Activated T-helper 2 cell treated with anti-CD3 and anti-CD28 coated beads, Interferon-gamma antibody, Interleukin-2, Interleukin-4, amounts not matched to agents 10 μg/mL and 5 μg/mL and 100 μg/mL, durations not matched to agents 14 hours and 24 hours and 36 hours (primary cell): ENCODE measurements at regions of chr2 and their contacts with region 1.

Region 1: GRCh38 chr2:161954103-161954502 is 119.9 kb downstream of the DPP4 start:
- DNase-seq: no peak
- H3K4me3 Mint-ChIP-seq: peak overlapping the region; percentile 37
- H3K27ac Mint-ChIP-seq: peak overlapping the region; percentile 94
- H3K4me1 Mint-ChIP-seq: peaks cover 66% of the 10 kb centered on the region
- H3K27me3 Mint-ChIP-seq: no peaks in the 10 kb centered on the region

Region 2: GRCh38 chr2:160406591-160407392 is 1547.3 kb before region 1 on chr2:
- intact Hi-C with region 1: loop called (anchors 5 kb)
- DNase-seq: peak; percentile 60
- H3K4me3 Mint-ChIP-seq: peak overlapping the region; percentile 86
- H3K27ac Mint-ChIP-seq: peak overlapping the region; percentile 80
- H3K4me1 Mint-ChIP-seq: peaks cover 74% of the 10 kb centered on the region
- H3K27me3 Mint-ChIP-seq: no peaks in the 10 kb centered on the region

Region 3: GRCh38 chr2:161199912-161200701 is 754.0 kb before region 1 on chr2:
- intact Hi-C with region 1: no loop called
- DNase-seq: no peak
- H3K4me3 Mint-ChIP-seq: no peak overlapping the region
- H3K27ac Mint-ChIP-seq: peak overlapping the region; percentile 42
- H3K4me1 Mint-ChIP-seq: peaks cover 25% of the 10 kb centered on the region
- H3K27me3 Mint-ChIP-seq: no peaks in the 10 kb centered on the region

Region 4: GRCh38 chr2:161238560-161239325 is 715.4 kb before region 1 on chr2:
- intact Hi-C with region 1: loop called (anchors 10 kb)
- DNase-seq: peak; percentile 39
- H3K4me3 Mint-ChIP-seq: peak overlapping the region; percentile 84
- H3K27ac Mint-ChIP-seq: peak overlapping the region; percentile 66
- H3K4me1 Mint-ChIP-seq: peaks cover 37% of the 10 kb centered on the region
- H3K27me3 Mint-ChIP-seq: no peaks in the 10 kb centered on the region

Region 5: GRCh38 chr2:161938339-161938738 is 15.8 kb before region 1 on chr2:
- intact Hi-C with region 1: no loop called
- DNase-seq: no peak
- H3K4me3 Mint-ChIP-seq: no peak overlapping the region
- H3K27ac Mint-ChIP-seq: no peak overlapping the region
- H3K4me1 Mint-ChIP-seq: no peaks in the 10 kb centered on the region
- H3K27me3 Mint-ChIP-seq: peaks cover 55% of the 10 kb centered on the region

Region 6: DNA sequence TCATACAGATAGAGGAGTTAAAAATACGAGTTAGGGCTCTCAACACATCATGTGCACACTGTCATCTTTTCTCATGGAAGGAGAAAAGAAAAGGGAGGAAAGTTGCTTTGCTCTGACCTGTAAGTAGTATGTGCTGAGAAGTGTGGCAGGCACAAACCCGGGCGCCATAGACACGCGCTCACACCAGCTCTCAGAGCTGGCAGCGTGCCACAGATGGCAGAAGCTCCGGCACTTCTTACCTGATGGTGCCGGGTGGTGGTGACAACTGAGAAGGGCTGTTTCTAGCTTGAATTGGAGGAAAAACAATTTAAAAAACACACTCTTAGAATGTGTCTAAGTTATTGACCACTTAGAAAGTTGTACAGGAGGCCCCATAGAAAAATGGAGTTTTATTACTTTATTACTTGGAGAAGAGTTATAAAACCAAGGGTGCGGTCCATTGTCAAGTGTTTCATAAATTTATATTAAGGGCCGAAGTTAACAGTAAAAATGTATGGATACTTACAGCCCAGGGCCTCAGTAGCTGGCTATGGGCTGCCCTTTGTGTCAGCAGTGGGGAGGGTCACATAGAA is 27.7 kb after region 1 on chr2:
- intact Hi-C with region 1: loop called (anchors 1 kb)
- DNase-seq: no peak
- H3K4me3 Mint-ChIP-seq: no peak overlapping the region
- H3K27ac Mint-ChIP-seq: peak overlapping the region; percentile 71
- H3K4me1 Mint-ChIP-seq: peaks cover 53% of the 10 kb centered on the region
- H3K27me3 Mint-ChIP-seq: no peaks in the 10 kb centered on the region

Region 7: DNA sequence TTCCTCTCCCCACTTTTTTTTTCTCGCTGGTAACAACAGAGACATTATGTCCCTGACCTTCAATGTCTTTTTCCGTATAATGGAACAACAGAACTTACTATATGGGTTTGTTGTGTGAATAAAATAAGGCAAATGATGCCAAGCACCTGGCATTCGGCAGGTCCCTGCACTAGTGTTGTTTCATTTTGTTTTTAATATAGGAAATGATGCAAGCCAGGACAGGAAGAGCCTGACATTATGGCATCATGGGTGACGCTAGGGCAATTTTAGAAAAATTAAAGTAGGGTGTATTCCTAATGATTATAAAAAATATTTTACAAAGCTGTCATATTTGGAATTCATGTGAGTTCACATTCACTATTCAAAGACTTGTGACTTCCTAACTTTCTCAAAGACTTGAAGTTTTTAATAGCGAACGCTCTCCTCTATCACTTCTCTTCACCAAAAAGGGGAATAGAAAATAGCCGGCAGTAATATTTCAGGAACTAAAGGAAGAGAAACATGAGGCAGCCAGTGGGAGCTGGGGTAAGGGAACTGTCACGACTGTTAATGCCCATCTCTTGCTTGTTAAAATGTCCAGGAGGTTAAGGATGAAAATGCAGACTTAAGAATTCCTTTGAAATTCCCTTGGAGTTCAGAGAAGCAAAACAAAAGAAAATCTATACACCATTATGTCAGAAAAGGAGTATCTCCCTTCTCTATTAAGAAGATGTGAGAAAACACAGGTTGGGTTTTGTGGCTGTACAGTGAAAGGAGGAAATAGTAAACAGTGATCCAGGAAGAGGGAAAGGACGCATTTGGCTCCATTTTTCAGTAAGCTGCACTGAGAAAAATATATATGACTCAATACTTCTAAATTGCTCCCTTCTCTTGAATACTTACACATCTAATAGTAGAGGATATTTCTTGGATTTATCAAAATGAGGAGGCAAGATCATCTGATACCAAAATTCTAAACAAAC is 59.7 kb after region 1 on chr2:
- intact Hi-C with region 1: loop called (anchors 1 kb)
- DNase-seq: no peak
- H3K4me3 Mint-ChIP-seq: peak overlapping the region; percentile 79
- H3K27ac Mint-ChIP-seq: peak overlapping the region; percentile 87
- H3K4me1 Mint-ChIP-seq: peaks cover 67% of the 10 kb centered on the region
- H3K27me3 Mint-ChIP-seq: no peaks in the 10 kb centered on the region

Region 8: DNA sequence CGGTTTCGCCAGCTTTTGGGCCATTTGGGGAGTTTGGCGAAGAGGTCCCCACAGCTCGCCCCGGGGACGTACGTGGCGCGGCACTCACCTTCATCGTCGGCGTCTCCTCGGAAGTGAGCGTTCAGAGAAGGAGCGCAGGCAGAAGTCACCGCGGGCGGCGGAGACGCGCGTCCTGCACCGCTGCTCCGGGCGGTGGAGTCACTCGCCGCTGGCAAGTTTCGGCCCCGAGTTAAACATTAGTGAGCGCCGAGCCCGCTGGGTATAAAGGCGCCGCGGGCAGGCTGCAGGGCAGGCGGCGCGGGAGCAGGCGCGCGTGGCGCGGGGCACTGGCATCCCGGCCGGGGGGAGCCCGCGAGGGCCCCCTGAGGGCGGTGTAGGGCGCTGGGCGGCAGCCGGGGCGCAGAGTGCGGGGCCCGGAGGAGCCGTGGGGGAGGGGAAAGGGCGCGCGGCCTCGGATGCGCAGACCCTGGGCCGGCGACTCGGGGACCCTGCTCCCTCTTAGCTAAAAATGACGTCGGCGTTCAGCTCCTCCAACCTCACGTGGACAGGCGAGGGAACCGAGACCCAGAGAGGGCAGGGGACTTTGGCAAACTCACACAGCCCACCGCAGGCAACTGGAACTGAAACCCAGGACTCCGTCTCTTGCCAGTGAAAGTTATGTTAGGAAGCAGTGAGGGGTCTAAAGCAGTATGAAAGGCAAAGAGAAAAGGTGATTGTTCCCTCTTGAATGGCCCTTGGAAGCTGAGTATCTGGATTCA is 120.0 kb after region 1 on chr2 and contains the start of gene DPP4:
- intact Hi-C with region 1: loop called (anchors 1 kb)
- DNase-seq: peak; percentile 46
- H3K4me3 Mint-ChIP-seq: peak within 1 kb of the TSS; percentile 87
- H3K27ac Mint-ChIP-seq: peak within 1 kb of the TSS; percentile 74
- H3K4me1 Mint-ChIP-seq: peaks cover 48% of the 10 kb centered on the region
- H3K27me3 Mint-ChIP-seq: no peaks in the 10 kb centered on the region
- total RNA-seq, gene DPP4: 65.8 and 67.0 TPM in 2 replicates

Region 9: GRCh38 chr2:162318328-162319180 is 364.5 kb after region 1 on chr2 and contains the start of gene IFIH1:
- intact Hi-C with region 1: loop called (anchors 10 kb)
- DNase-seq: peak; percentile 76
- H3K4me3 Mint-ChIP-seq: peak within 1 kb of the TSS; percentile 91
- H3K27ac Mint-ChIP-seq: peak within 1 kb of the TSS; percentile 96
- H3K4me1 Mint-ChIP-seq: peaks cover 51% of the 10 kb centered on the region
- H3K27me3 Mint-ChIP-seq: no peaks in the 10 kb centered on the region
- total RNA-seq, gene IFIH1: 14.5 and 16.1 TPM in 2 replicates